Gastrocnemius medialis (tissue), 4 donors: ENCODE measurements at regions of chr20 and their contacts with region 1.

Region 1: DNA sequence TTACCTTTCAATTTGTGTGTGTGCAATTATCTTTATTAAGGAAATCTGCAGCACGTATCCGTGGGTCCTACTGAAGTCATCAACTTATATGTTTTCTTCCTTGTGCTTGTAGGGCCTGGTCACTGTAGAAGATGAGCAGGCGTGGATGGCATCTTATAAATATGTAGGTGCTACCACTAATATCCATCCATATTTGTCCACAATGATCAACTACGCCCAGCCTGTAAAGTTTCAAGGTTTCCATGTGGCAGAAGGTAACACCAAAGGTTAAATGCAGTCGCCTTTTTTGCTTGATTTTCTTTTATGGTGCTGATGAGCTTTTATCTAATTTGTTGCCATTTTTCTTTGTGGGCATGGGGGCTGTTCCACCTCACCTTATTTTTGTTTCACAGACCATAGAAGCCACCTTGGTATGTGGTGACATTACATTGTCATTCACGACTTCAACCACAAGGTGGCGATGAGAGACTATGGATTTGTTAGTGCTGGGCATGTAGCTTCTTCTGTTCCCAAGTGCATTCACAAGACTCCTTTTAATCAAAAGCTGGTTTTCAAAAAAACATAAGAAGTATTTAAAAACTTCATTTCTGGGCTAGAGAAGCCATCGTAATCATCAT is 106.5 kb upstream of the LAMP5 start:
- DNase-seq: peak in 1 of 2 donors; percentile 21
- ATAC-seq: peak; percentile 72 to 75
- H3K4me3 ChIP-seq: no peak overlapping the region
- H3K27ac ChIP-seq: no peak overlapping the region
- H3K4me1 ChIP-seq: no peaks in the 10 kb centered on the region
- H3K27me3 ChIP-seq: no peaks in the 10 kb centered on the region
- CTCF ChIP-seq: peak; percentile 66 to 77 (median 73)
- POLR2A ChIP-seq: no peak

Region 2: DNA sequence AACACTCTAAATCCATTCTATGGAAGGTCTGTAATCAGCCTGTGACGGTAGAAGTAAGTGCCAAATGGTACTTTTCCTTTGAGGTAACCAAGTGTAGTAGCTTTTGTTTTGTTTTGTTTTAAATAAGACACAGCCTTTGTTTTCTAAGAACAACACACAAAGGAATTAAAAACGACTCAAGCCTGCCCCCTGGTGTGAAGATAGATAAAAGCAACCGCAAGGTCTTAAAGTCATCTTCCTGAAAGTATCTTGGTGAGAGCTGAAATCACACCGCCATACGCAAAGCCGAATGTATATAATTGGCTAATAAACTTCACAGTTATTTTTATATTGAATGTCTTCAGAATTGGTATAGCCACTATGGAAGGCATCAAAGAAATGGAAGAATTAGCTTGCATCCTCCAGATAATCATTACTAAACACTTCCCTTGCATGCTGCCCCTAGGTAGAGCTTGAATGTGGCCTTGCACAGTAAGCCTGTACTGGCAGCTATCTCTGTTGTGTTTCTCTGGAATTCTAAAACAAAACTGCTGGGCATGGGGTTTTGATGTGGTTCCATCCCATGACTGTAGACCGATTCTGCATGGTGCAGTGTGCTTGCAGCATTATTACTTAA is 202.1 kb after region 1 on chr20:
- in situ Hi-C with region 1: loop called (anchors 5 kb)
- intact Hi-C with region 1: loop called (anchors 1 kb)
- DNase-seq: no peak
- ATAC-seq: no peak
- H3K4me3 ChIP-seq: no peak overlapping the region
- H3K27ac ChIP-seq: no peak overlapping the region
- H3K4me1 ChIP-seq: no peaks in the 10 kb centered on the region
- H3K27me3 ChIP-seq: no peaks in the 10 kb centered on the region
- CTCF ChIP-seq: peak in 4 of 5 experiments; percentile 26 to 66 (median 50)
- POLR2A ChIP-seq: no peak

Region 3: GRCh38 chr20:9912858-9913434 is 505.0 kb after region 1 on chr20:
- in situ Hi-C with region 1: loop called in 1 of 4 experiments (anchors 25 kb)
- intact Hi-C with region 1: no loop called
- DNase-seq: no peak
- ATAC-seq: no peak
- H3K4me3 ChIP-seq: no peak overlapping the region
- H3K27ac ChIP-seq: no peak overlapping the region
- H3K4me1 ChIP-seq: no peaks in the 10 kb centered on the region
- H3K27me3 ChIP-seq: peaks cover 0 to 3% (median 0%) of the 10 kb centered on the region in 3 donors
- CTCF ChIP-seq: peak in 4 of 5 experiments; percentile 25 to 77 (median 58)
- POLR2A ChIP-seq: no peak